ENCODE measurements at regions of chr11 and their contacts with region 1.

Region 1: DNA sequence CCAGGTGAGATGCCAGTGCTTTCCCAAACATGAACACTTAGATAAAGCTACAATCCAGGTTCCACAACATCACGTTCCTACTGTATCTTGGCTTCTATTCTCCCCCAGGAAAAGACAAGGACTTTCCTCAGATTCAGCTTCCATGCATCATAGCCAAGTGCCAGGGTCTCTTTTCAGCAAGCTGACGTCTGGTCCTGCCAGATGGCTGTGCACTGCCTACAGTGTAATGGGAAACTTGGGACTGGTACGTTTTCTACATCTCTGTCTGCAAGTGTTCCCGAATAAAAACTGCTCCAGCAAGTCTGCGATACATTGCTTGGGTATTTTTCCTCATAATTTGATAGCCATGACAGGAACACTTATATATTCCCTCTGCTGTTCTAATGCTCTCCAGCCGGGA is 412.5 kb downstream of the FAM181B start:
- DNase-seq: no peak
- ATAC-seq: no peak

Region 2: GRCh38 chr11:82261367-82261766 is 59.8 kb before region 1 on chr11:
- intact Hi-C with region 1: loop called in 1 of 2 experiments (anchors 10 kb)
- DNase-seq: no peak
- ATAC-seq: no peak